Ascending aorta (tissue), 2 donors: ENCODE measurements at regions of chr2 and their contacts with region 1.

Region 1: GRCh38 chr2:241686649-241687425 is at the start of gene DTYMK:
- DNase-seq: peak; percentile 84 to 97
- H3K4me3 ChIP-seq: peak within 1 kb of the TSS; percentile 85 to 94
- H3K27ac ChIP-seq: peak within 1 kb of the TSS; percentile 90 to 94
- H3K4me1 ChIP-seq: peaks cover 7 to 18% of the 10 kb centered on the region in 2 donors
- H3K27me3 ChIP-seq: no peaks in the 10 kb centered on the region
- CTCF ChIP-seq: no peak
- total RNA-seq, gene DTYMK: 25.0 TPM

Region 2: DNA sequence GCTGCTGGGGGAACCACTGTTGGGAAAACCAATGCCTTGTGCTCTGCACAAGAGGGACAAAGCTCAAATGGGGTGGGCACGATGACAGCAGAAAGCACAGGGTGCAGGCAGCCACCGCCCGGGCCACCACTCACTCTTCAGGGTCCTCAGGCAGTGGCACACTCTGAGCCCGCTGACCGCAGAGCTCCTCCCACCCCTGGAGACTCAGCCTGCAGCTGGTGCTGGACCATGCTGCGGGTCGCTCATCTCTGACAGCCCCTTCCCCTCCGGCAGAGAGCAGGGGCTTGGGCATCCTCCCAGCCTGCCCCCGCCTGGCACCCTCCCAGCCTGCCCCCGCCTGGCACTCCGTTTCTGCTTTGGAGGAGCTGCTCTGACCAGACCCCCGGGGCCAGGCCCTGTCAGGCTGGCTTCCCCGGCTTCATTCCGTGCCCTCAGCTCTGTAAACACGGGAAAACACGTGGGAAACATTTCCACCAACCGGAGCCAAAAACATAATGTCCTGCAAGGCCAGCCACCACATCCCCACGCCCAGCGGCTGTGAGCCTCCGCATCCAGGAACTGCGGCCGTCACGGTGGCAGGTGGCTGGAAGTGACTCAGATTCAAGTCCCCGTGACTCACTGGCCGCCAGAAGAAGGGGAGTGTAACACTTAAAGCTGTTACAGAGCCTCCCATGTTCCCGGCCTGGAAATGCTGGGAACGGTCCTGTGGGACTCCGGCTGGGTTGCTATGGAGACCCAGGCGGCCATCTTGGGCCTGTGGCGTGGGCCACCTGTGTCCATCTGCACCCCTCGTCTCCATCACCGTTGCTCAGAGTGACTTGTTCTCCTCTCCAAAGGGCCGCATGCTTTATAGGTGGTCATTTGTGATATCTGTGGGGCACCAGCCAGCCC is 695.2 kb before region 1 on chr2:
- intact Hi-C with region 1: loop called (anchors 5 kb)
- DNase-seq: peak; percentile 95 to 99
- H3K4me3 ChIP-seq: peak overlapping the region in 1 of 2 donors; percentile 26
- H3K27ac ChIP-seq: peak overlapping the region; percentile 92 to 93
- H3K4me1 ChIP-seq: peaks cover 54 to 84% of the 10 kb centered on the region in 2 donors
- H3K27me3 ChIP-seq: no peaks in the 10 kb centered on the region
- CTCF ChIP-seq: no peak

Region 3: DNA sequence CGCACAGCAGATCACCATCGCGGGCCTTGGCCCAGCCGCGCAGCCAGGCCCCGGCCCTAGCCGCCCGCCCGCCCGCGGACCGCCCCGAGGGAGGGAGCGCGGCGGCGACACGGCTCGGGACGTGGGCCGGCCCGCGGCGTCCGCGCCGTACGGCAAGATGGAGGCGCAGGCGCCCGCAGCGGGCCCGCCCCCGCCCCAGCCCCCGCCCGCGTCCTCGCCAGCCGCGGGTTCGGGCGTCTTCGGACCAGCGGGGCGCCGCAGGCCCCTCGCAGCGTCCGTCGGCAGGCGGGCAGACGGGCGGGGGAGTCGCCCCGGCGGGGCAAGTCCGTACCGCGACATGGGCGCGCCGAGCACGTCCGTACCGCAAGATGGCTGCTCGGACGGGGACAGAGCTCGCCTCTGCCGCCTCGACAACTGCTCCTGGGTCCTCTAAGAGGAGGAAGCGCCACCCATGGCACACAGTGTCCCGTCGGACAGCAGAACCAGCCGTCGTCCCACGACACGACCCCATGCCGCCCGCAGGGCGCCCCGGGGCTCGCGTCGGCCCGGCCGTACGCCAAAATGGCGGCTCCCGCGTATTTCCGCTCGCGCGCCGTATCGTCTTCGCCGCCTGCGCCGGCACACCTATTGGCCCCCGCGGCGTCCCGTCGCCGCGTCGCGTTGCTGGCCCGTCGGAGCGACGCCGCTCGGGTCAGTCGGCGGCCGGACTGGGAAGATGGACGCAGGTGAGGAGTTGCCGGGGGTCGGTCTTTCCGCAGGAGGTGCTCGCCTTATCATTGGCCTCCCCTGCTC is 49.6 kb before region 1 on chr2 and contains the starts of genes ATG4B and THAP4:
- intact Hi-C with region 1: loop called (anchors 1 kb)
- DNase-seq: peak; percentile 26 to 88
- H3K4me3 ChIP-seq: peak within 1 kb of the TSS; percentile 89 to 100
- H3K27ac ChIP-seq: peak within 1 kb of the TSS; percentile 99
- H3K4me1 ChIP-seq: peaks cover 17 to 29% of the 10 kb centered on the region in 2 donors
- H3K27me3 ChIP-seq: no peaks in the 10 kb centered on the region
- CTCF ChIP-seq: no peak
- total RNA-seq, gene ATG4B: 225 TPM
- total RNA-seq, gene THAP4: 80.8 TPM

Region 4: DNA sequence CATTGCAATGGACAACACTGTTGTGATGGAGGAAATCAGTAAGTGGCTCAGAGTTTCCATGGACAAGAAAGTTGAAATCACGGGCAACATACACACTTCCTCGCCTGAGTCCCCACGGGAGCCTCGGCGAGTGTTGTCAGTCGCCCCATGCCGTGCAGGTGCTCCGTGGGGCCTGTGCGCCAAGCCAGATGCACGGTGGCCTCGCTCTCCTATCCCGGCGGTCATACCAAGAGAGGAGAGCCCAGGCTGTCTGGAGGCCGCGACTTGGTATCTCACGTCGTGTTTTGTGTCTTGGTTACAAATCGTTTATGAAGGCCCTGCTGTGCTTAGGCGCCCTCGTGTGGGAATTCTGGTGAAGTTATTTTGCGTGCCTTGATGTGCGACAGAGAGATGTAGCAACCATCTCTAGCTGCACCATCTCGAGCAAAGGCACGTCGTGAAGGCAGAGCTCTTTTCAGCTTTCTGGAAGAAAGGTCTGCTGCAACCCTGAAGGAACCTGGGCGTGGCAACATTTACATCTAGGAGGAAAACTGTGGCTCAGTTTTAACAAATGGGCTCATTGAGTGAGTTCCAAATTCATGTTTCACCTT is 27.6 kb before region 1 on chr2:
- intact Hi-C with region 1: no loop called
- DNase-seq: no peak
- H3K4me3 ChIP-seq: no peak overlapping the region
- H3K27ac ChIP-seq: no peak overlapping the region
- H3K4me1 ChIP-seq: no peaks in the 10 kb centered on the region
- H3K27me3 ChIP-seq: no peaks in the 10 kb centered on the region
- CTCF ChIP-seq: peak; percentile 30 to 45 (median 32)

Region 5: DNA sequence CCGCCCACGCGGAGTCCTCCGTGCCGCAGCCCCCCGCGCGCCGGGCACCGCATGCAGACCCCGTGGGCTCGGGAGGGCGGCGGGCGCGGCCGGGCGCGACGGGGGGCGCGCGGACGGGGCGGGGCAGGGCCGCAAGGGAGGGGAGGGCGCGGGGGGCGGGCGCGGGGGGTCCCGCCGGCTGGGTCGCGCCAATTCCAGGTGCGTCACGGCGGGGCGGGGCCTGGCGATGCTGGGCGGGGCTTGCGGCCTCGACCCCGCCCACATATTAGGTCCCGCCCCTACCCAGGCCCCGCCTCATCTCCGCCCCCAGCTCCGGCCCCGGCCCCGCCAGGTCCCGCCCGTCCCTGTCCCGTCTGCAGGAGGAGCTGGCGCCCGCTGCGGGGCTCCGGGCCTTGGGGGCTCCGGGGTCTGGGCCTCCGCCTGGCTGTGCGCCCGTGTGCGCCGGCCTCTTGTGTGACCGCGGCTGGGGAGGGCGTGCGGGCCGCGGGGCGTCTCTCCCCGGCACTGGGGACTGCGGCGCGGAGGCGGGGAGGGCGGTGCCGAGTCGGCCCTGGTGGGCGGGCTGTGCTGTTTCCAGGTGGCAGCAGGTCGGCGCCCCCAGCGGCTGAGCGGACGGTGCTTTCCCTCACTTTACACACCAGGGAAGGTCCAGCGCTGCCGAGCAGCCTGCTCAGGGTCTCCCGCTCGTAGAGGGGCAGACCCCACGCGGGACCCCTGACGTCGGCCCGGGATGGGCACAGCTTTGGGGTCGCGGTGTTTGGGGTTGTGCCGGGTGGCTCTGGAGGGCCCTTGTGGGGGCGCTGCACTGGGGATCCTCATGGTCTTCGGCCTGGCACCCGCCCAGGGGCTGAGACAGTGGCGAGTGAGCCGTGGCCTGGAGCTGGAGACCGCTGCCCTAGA is 15.5 kb after region 1 on chr2:
- intact Hi-C with region 1: loop called (anchors 1 kb)
- DNase-seq: peak; percentile 15 to 87
- H3K4me3 ChIP-seq: peak overlapping the region; percentile 75 to 82
- H3K27ac ChIP-seq: peak overlapping the region; percentile 93 to 96
- H3K4me1 ChIP-seq: peaks cover 6 to 14% of the 10 kb centered on the region in 2 donors
- H3K27me3 ChIP-seq: no peaks in the 10 kb centered on the region
- CTCF ChIP-seq: peak; percentile 20 to 33 (median 27)

Region 6: DNA sequence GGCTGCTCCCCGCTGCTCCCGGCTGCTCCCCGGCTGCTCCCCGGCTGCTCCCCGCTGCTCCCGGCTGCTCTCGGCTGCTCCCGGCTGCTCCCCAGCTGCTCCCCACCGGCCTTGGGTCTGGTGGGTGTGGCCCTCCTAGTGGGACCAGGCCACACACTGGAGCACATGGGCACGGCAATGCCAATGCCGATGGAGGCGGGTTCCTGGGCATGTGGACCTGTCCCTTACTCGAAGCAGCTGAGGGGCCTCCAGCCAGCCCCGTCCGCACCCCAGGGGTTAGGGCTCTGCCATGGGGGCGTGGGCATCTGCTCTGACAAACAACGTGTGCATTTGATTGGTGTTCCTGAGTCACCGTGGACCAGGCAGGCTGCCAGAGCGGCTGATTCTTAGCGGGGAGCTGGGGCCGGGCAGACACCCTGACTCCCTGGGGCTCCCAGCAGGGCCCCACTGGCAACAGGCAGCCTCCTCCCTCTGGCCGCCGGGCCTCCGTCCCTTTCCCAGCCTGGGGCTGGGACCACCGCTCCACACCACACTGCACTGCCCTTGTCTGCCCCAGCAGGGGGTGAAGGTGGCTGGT is 87.9 kb after region 1 on chr2:
- intact Hi-C with region 1: no loop called
- DNase-seq: peak in 1 of 2 donors; percentile 63
- H3K4me3 ChIP-seq: no peak overlapping the region
- H3K27ac ChIP-seq: no peak overlapping the region
- H3K4me1 ChIP-seq: no peaks in the 10 kb centered on the region
- H3K27me3 ChIP-seq: peaks cover 4% of the 10 kb centered on the region
- CTCF ChIP-seq: no peak

Region 7: GRCh38 chr2:241877989-241878970 is 191.4 kb after region 1 on chr2:
- intact Hi-C with region 1: loop called (anchors 5 kb)
- DNase-seq: peak in 1 of 2 donors; percentile 81
- H3K4me3 ChIP-seq: no peak overlapping the region
- H3K27ac ChIP-seq: no peak overlapping the region
- H3K4me1 ChIP-seq: peaks cover 5 to 9% of the 10 kb centered on the region in 2 donors
- H3K27me3 ChIP-seq: no peaks in the 10 kb centered on the region
- CTCF ChIP-seq: peak; percentile 44 to 82 (median 78)